ENCODE measurements at regions of chr7 and their contacts with region 1.

Region 1: GRCh38 chr7:21617916-21618390 is 75.1 kb downstream of the DNAH11 start:
- DNase-seq: peak; percentile 95
- H3K4me3 Mint-ChIP-seq: peak overlapping the region; percentile 3
- H3K27ac Mint-ChIP-seq: peak overlapping the region; percentile 89
- H3K4me1 Mint-ChIP-seq: peaks cover 29% of the 10 kb centered on the region
- H3K27me3 Mint-ChIP-seq: no peaks in the 10 kb centered on the region
- CTCF ChIP-seq: no peak

Region 2: GRCh38 chr7:21580073-21580521 is 37.9 kb before region 1 on chr7:
- CTCF ChIA-PET with region 1: no interaction called
- POLR2A ChIA-PET with region 1: interaction called, 4 read pairs
- intact Hi-C with region 1: loop called (anchors 2 kb)
- DNase-seq: peak; percentile 91
- H3K4me3 Mint-ChIP-seq: peak overlapping the region; percentile 17
- H3K27ac Mint-ChIP-seq: peak overlapping the region; percentile 95
- H3K4me1 Mint-ChIP-seq: peaks cover 15% of the 10 kb centered on the region
- H3K27me3 Mint-ChIP-seq: no peaks in the 10 kb centered on the region
- CTCF ChIP-seq: no peak